Dorsolateral prefrontal cortex (tissue), 120 donors: ENCODE measurements at regions of chrX and their contacts with region 1.

Region 1: DNA sequence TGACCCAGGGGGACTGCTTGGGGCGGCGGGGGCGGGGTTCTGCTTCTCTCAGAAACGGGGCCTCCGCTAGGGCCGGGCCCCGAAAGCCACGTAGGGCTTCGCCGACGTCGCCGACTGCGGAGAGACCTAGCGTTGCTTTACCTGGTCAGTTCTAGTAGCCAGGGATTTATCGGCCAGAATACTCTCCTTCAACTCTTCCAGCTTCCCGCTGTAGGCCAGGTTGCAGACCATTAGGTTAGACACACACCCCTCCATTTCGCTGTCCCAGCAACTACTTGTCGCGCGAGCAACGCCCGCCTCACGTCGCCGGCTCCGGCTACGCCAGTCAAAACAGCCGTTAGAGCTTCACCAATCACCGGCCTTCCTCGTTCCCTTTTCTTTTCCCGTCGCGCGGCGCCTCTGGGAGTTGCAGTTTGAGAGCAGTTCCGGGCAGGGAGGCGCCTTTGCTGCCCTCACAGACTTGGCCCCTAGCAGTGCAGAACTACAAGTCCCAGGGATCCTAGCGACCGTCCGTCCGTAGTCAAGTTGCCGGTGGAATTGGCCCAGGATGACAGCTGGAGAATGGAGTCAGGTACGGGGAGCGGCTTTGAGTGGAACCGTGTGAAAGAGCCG is at the starts of genes ATG4A and PSMD10:
- DNase-seq: peak; percentile 78 to 94 (median 92)
- H3K4me3 ChIP-seq: peak within 1 kb of the TSS; percentile 41 to 80 (median 66)
- H3K27ac ChIP-seq: peak within 1 kb of the TSS in 47 of 59 donors; percentile 9 to 88 (median 70)
- H3K27me3 ChIP-seq: peaks cover 0 to 24% (median 0%) of the 10 kb centered on the region in 45 donors
- CTCF ChIP-seq: peak in 28 of 56 donors; percentile 9 to 43 (median 24)
- total RNA-seq, gene ATG4A: 5.0 to 15.7 (median 7.7) TPM
- total RNA-seq, gene PSMD10: 31.0 to 78.3 (median 56.5) TPM

Region 2: GRCh38 chrX:107646735-107647134 is 444.6 kb before region 1 on chrX:
- intact Hi-C with region 1: no loop called
- DNase-seq: no peak
- H3K4me3 ChIP-seq: no peak overlapping the region
- H3K27ac ChIP-seq: no peak overlapping the region
- H3K27me3 ChIP-seq: peaks cover 0 to 60% (median 15%) of the 10 kb centered on the region in 45 donors
- CTCF ChIP-seq: no peak

Region 3: GRCh38 chrX:107826238-107827029 is 264.9 kb before region 1 on chrX:
- intact Hi-C with region 1: loop called in 1 of 2 experiments (anchors 10 kb)
- DNase-seq: peak in 5 of 10 donors; percentile 14 to 56 (median 39)
- H3K4me3 ChIP-seq: peak overlapping the region; percentile 34 to 71 (median 57)
- H3K27ac ChIP-seq: peak overlapping the region in 55 of 59 donors; percentile 1 to 88 (median 77)
- H3K27me3 ChIP-seq: peaks cover 0 to 57% (median 11%) of the 10 kb centered on the region in 45 donors
- CTCF ChIP-seq: no peak